Head of caudate nucleus (tissue), 42 donors: ENCODE measurements at regions of chr2 and their contacts with region 1.

Region 1: GRCh38 chr2:174341286-174341994 is 6.7 kb downstream of the SP9 start:
- DNase-seq: peak; percentile 76 to 96 (median 91)

Region 2: GRCh38 chr2:173402405-173402974 is 939.0 kb before region 1 on chr2:
- intact Hi-C with region 1: loop called (anchors 5 kb)
- DNase-seq: peak; percentile 66 to 93 (median 80)

Region 3: DNA sequence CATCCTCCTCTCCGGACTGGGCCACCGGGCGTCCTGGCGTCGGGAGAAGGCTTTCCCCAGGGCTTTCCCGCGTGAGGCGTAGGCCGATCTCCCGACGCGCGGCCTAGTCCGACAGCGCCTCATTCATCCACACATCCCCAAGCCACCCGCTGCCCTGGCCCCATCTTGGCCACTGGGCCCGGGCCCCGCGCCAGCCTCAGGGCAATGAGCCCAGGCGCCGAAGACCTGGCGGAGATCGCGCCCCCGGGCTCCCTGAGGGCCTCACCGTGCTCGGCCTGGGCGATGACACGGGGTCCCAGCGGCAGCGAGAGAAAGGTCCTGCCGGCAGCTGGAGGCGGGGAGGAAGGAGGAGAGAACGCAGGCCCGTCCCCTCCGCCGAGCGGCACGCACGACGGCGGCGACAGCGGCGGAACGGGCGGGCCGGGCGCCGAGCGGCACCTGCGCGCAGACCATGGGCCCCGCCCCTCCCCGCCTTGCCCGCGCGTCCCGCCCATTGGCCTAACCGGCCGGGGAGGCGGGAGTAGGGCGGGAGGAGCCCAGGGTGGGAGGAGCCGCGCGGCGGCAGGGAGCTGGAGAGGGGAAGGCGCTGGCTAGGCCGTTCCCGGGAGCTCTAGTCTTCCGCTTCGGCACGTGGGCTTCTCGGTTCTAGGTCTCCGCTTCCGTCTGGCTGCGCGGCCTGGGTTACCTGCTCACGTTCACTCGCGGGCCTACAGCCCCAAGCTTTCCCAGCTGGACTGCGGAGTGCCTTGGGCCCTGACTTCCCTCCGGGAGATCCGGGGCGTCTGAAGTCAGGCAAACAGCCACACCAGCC is 93.0 kb before region 1 on chr2 and contains the start of gene OLA1:
- intact Hi-C with region 1: loop called (anchors 5 kb)
- DNase-seq: peak; percentile 78 to 98 (median 96)